ENCODE measurements at regions of chr11 and their contacts with region 1.

Region 1: DNA sequence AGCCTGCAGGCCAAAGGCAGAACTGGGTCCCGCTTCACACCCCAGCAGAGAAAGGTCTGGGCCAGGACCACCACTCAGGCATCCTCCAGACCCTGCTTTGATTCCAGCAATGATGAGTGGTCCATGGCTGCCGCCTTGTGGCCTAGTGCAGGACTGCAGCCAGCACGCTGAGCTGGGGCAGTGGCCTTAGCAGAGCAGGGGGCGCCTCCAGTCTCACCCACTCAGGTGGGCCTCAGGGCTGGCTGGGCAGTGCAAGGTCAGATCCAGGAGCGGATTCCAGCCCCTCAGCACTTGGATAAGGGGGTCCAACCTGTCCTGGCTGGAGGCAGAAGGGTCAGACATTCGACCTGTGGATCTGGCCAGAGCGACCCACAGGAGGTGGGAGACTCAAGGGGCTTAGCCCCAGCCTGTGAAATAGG is 9.6 kb upstream of the PDE2A start:
- DNase-seq: peak; percentile 42 to 85
- ATAC-seq: peak; percentile 57 to 85
- H3K4me3 ChIP-seq: no peak overlapping the region
- H3K27ac ChIP-seq: no peak overlapping the region
- H3K4me1 ChIP-seq: peaks cover 9% of the 10 kb centered on the region; the same call in 2 of the 3 replicates
- CTCF ChIP-seq: peak; percentile 83
- EP300 ChIP-seq: no peak
- POLR2A ChIP-seq: no peak
- RAD21 ChIP-seq: peak; percentile 82 to 87

Region 2: GRCh38 chr11:72378704-72379384 is 304.9 kb before region 1 on chr11:
- CTCF ChIA-PET with region 1: no interaction called
- POLR2A ChIA-PET with region 1: no interaction called
- DNase-seq: no peak
- ATAC-seq: no peak
- H3K4me3 ChIP-seq: no peak overlapping the region
- H3K27ac ChIP-seq: no peak overlapping the region
- H3K4me1 ChIP-seq: no peaks in the 10 kb centered on the region
- CTCF ChIP-seq: no peak
- EP300 ChIP-seq: no peak
- POLR2A ChIP-seq: no peak
- RAD21 ChIP-seq: no peak

Region 3: GRCh38 chr11:72471005-72471898 is 212.5 kb before region 1 on chr11:
- CTCF ChIA-PET with region 1: interaction called, 43 read pairs
- POLR2A ChIA-PET with region 1: no interaction called
- DNase-seq: peak; percentile 66 to 72
- ATAC-seq: peak; percentile 95 to 98
- H3K4me3 ChIP-seq: no peak overlapping the region
- H3K27ac ChIP-seq: no peak overlapping the region
- H3K4me1 ChIP-seq: no peaks in the 10 kb centered on the region
- CTCF ChIP-seq: peak; percentile 83
- EP300 ChIP-seq: no peak
- POLR2A ChIP-seq: no peak
- RAD21 ChIP-seq: peak; percentile 76 to 80

Region 4: DNA sequence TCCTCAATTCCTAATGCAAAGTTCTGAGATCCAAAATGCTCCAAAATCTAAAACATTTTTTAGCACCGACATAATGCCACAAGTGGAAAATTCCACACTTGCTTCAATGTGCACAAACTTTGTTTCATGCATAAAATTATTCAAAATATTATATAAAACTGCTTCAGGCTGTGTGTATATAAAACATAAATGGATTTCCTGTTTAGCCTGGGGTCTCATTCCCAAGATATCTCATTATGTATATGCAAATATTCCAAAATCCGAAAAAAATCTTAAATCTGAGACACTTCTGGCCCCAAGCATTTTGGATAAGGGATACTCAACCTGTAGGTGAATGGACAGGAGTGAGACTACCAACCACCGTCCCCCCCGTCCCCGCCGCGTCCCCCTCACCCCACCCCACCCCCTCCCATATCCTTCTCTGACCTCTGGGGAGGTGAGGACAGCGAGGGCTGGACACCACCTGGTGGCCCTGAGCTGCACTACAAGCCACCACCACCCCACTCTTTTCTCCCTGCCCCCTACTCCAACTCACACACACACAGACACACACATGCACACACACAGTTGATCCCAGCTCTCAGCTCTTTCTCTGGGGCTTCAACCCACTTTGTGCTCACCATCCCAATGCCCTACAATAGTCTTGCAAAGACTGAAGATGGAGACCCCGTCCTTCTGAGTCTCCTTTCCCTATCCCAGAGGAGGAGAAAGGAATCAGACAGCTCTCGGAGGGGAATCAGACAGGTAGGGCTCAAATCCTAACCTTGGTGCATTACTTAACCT is 110.5 kb before region 1 on chr11:
- CTCF ChIA-PET with region 1: interaction called, 15 read pairs
- POLR2A ChIA-PET with region 1: no interaction called
- DNase-seq: peak; percentile 47 to 67
- ATAC-seq: peak; percentile 85 to 94
- H3K4me3 ChIP-seq: no peak overlapping the region
- H3K27ac ChIP-seq: no peak overlapping the region
- H3K4me1 ChIP-seq: peaks cover 3% of the 10 kb centered on the region; the same call in 1 of the 3 replicates
- CTCF ChIP-seq: peak; percentile 59
- EP300 ChIP-seq: no peak
- POLR2A ChIP-seq: no peak
- RAD21 ChIP-seq: peak; percentile 68 to 74

Region 5: DNA sequence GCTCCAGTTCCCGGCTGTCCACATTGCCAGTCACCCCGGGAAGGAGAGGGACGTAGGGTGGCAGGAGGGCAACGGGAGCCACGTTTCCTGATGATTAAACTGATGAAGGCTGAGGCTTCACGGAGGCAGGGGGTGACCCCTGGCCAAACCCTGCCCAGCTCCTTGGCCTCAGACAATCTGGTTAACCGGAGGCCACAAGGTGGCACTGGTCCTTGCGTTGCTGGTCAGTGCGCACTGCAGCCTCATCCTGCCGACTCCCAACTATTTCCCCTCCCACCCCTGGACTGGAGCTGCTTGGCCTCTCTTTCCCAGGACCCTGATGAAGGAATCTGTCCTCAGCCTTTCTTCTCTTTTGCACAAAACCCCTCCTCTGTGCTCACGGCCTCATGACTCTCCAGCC is 84.9 kb before region 1 on chr11:
- CTCF ChIA-PET with region 1: interaction called, 293 read pairs
- POLR2A ChIA-PET with region 1: no interaction called
- DNase-seq: peak; percentile 59 to 65
- ATAC-seq: peak; percentile 75 to 91
- H3K4me3 ChIP-seq: no peak overlapping the region
- H3K27ac ChIP-seq: no peak overlapping the region
- H3K4me1 ChIP-seq: peaks cover 13% of the 10 kb centered on the region
- CTCF ChIP-seq: peak; percentile 58
- EP300 ChIP-seq: no peak
- POLR2A ChIP-seq: no peak
- RAD21 ChIP-seq: peak; percentile 54 to 59; a peak in 4 of 5 replicates

Region 6: DNA sequence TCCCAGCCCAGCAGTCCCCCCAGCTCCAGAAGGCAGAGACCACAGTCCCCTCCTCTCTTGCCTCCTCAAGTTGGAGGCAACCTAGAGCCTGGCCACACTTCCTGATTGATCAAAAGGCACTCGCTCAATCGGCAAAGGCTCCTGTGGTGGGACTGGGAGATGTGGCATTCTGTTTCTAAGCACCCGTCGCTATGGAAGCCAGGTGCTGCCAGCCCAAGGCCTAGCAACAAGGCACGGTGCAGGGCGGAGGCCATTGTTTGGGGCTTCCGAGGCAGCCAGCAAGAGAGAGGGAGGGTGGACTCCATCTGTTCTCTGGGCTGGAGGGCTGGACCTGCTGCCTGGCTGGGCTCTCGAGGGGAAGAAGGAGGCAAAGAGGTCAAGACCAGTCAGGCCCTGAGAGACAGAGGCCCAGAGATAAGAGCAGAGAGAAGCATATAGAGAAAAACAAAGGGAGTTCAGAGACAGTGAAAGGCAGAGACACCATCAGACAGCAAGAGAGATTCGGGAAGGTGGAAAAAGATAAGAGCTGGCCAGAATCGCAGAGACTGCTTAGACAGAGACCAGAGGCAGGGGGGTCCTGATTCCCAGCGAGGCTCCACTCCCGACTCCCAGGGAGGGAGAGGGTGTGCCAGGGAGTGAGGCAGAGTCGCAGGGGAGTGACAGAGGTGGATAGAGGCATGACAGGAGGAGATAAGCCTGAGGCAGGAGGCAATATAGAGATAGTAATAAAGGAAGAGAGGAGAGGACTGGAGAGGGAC is 30.7 kb before region 1 on chr11:
- CTCF ChIA-PET with region 1: interaction called, 33 read pairs
- POLR2A ChIA-PET with region 1: no interaction called
- DNase-seq: no peak
- ATAC-seq: no peak
- H3K4me3 ChIP-seq: no peak overlapping the region
- H3K27ac ChIP-seq: no peak overlapping the region
- H3K4me1 ChIP-seq: no peaks in the 10 kb centered on the region
- CTCF ChIP-seq: no peak
- EP300 ChIP-seq: no peak
- POLR2A ChIP-seq: no peak
- RAD21 ChIP-seq: no peak

Region 7: GRCh38 chr11:72696866-72697700 is 13.3 kb after region 1 on chr11:
- CTCF ChIA-PET with region 1: interaction called, 40 read pairs
- POLR2A ChIA-PET with region 1: no interaction called
- DNase-seq: no peak
- ATAC-seq: peak in 1 of 2 experiments; percentile 40; a peak in 3 of 6 replicates
- H3K4me3 ChIP-seq: no peak overlapping the region
- H3K27ac ChIP-seq: no peak overlapping the region
- H3K4me1 ChIP-seq: peaks cover 7% of the 10 kb centered on the region; the same call in 2 of the 3 replicates
- CTCF ChIP-seq: no peak
- EP300 ChIP-seq: no peak
- POLR2A ChIP-seq: no peak
- RAD21 ChIP-seq: no peak

Region 8: GRCh38 chr11:72716290-72716689 is 32.5 kb after region 1 on chr11:
- CTCF ChIA-PET with region 1: interaction called, 25 read pairs
- POLR2A ChIA-PET with region 1: no interaction called
- DNase-seq: no peak
- ATAC-seq: no peak
- H3K4me3 ChIP-seq: no peak overlapping the region
- H3K27ac ChIP-seq: no peak overlapping the region
- H3K4me1 ChIP-seq: peaks cover 12% of the 10 kb centered on the region; the same call in 2 of the 3 replicates
- CTCF ChIP-seq: no peak
- EP300 ChIP-seq: no peak
- POLR2A ChIP-seq: no peak
- RAD21 ChIP-seq: no peak

Region 9: GRCh38 chr11:72772978-72773690 is 89.3 kb after region 1 on chr11:
- CTCF ChIA-PET with region 1: no interaction called
- POLR2A ChIA-PET with region 1: no interaction called
- DNase-seq: no peak
- ATAC-seq: peak; percentile 12 to 28; a peak in 2 of 6 replicates
- H3K4me3 ChIP-seq: no peak overlapping the region
- H3K27ac ChIP-seq: no peak overlapping the region
- H3K4me1 ChIP-seq: peaks cover 11% of the 10 kb centered on the region
- CTCF ChIP-seq: no peak
- EP300 ChIP-seq: no peak
- POLR2A ChIP-seq: no peak
- RAD21 ChIP-seq: no peak

Measured in A549 (cell line).